ENCODE measurements at regions of chr18 and their contacts with region 1.

Region 1: GRCh38 chr18:70082430-70082829 is 123.1 kb downstream of the RTTN start:
- DNase-seq: no peak
- H3K4me3 Mint-ChIP-seq: no peak overlapping the region
- H3K27ac Mint-ChIP-seq: no peak overlapping the region
- H3K4me1 Mint-ChIP-seq: no peaks in the 10 kb centered on the region
- H3K27me3 Mint-ChIP-seq: no peaks in the 10 kb centered on the region
- CTCF ChIP-seq: no peak

Region 2: GRCh38 chr18:68847219-68847837 is 1235.1 kb before region 1 on chr18:
- CTCF ChIA-PET with region 1: interaction called, 3 read pairs
- POLR2A ChIA-PET with region 1: no interaction called
- intact Hi-C with region 1: loop called (anchors 1 kb)
- DNase-seq: peak; percentile 25
- H3K4me3 Mint-ChIP-seq: no peak overlapping the region
- H3K27ac Mint-ChIP-seq: no peak overlapping the region
- H3K4me1 Mint-ChIP-seq: no peaks in the 10 kb centered on the region
- H3K27me3 Mint-ChIP-seq: no peaks in the 10 kb centered on the region
- CTCF ChIP-seq: peak; percentile 61

Region 3: DNA sequence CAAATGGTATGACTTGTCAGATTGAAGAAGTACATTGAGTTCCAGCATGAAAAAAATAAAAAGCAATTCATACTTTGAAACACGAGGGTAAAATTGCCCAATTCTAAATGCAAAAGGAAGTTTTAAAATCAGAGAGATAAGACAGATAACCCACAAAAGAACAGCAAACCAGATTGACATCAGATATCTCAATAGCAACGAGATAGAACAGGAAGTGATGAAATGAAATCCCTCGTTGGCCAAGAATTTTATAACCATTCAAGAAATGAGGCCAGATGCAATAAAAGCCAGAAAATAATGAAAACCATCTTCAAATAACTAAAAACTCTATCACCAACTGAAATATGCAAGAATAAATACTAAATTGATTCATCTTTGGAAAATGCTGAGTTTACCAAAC is 307.6 kb before region 1 on chr18:
- CTCF ChIA-PET with region 1: no interaction called
- POLR2A ChIA-PET with region 1: no interaction called
- intact Hi-C with region 1: no loop called
- DNase-seq: no peak
- H3K4me3 Mint-ChIP-seq: no peak overlapping the region
- H3K27ac Mint-ChIP-seq: no peak overlapping the region
- H3K4me1 Mint-ChIP-seq: no peaks in the 10 kb centered on the region
- H3K27me3 Mint-ChIP-seq: peaks cover 53% of the 10 kb centered on the region
- CTCF ChIP-seq: no peak

Measured in MCF 10A (cell line).